ENCODE measurements at regions of chr7 and their contacts with region 1.

Region 1: DNA sequence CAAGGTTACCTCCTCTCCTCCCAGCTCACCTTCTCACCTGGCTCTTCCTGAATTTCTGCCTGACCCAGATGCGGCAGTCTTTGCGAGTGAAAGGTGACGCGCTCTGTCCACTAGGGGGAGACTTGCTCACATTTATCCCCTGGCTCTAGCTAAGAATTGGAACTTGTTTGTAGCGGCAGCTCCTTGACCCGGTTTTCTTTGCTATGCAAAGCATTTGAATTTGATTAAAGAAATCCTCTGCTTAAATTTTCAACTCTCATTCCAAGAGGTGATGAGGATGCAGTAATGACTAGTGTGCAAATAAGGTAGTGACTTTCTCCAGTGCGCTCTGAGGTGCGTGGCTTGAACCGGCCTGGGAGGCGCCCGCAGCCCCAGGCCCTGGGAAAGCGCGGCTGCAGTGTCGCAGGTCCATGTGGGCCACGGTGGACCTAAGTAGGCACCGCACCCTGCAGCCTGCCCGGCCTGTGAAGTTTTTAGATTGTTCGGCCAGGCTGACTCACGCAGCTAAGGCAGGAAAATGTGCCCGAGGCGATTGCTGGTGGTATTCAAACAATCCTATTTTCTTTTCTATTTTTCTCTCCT is 336.9 kb upstream of the NPSR1 start:
- DNase-seq: peak; percentile 79
- H3K4me3 ChIP-seq: peak overlapping the region in 2 of 3 experiments; percentile 2
- H3K27ac ChIP-seq: no peak overlapping the region
- H3K4me1 ChIP-seq: peaks cover 3% of the 10 kb centered on the region
- H3K27me3 ChIP-seq: no peaks in the 10 kb centered on the region
- CTCF ChIP-seq: peak; percentile 86 to 87
- POLR2A ChIP-seq: no peak

Region 2: DNA sequence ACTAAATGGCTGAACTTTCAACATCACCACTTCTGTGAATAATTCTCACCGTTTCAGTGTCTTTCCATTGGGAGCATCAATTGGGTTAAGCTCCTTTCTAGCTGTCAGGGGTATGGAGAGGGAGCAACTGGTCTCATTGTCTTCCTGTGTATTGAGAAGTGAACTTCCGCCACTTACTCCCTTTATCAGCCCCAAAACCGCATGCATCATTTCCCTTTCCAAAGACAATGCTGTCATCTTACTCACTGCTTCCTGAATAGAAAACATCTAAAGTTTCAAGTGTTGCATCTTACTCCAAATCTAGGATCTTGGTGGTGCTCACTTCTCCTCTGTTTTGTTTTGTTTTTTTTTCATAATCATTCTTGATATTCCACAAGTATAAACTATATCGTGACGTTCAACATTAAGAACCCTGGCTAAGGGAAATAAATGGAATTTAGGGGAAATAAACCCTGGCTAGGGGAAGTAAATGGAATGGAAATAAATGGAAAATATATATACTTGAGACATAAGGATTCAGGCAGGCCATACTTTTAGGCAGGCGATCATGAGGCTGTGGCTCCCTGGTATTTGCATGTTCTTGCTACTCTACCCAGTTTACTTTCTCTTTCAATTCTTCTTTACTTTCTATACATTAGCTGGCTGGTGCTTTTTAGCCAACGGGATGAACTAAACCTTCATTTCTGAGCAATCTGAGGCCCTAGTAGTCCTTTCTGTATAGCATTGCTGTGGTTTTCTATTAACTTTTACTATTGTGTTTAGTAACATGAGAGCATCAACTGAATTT is 43.9 kb before region 1 on chr7:
- CTCF ChIA-PET with region 1: interaction called, 4 read pairs
- POLR2A ChIA-PET with region 1: no interaction called
- dilution Hi-C with region 1: no loop called
- intact Hi-C with region 1: loop called (anchors 1 kb)
- DNase-seq: peak; percentile 84
- H3K4me3 ChIP-seq: peak overlapping the region in 1 of 3 experiments; percentile 29
- H3K27ac ChIP-seq: peak overlapping the region; percentile 86
- H3K4me1 ChIP-seq: peaks cover 25% of the 10 kb centered on the region
- H3K27me3 ChIP-seq: no peaks in the 10 kb centered on the region
- CTCF ChIP-seq: no peak
- POLR2A ChIP-seq: peak; percentile 58

Region 3: GRCh38 chr7:34309116-34309515 is 12.0 kb before region 1 on chr7:
- CTCF ChIA-PET with region 1: interaction called, 18 read pairs
- POLR2A ChIA-PET with region 1: no interaction called
- dilution Hi-C with region 1: no loop called
- intact Hi-C with region 1: no loop called
- DNase-seq: no peak
- H3K4me3 ChIP-seq: no peak overlapping the region
- H3K27ac ChIP-seq: no peak overlapping the region
- H3K4me1 ChIP-seq: no peaks in the 10 kb centered on the region
- H3K27me3 ChIP-seq: no peaks in the 10 kb centered on the region
- CTCF ChIP-seq: no peak
- POLR2A ChIP-seq: no peak

Region 4: DNA sequence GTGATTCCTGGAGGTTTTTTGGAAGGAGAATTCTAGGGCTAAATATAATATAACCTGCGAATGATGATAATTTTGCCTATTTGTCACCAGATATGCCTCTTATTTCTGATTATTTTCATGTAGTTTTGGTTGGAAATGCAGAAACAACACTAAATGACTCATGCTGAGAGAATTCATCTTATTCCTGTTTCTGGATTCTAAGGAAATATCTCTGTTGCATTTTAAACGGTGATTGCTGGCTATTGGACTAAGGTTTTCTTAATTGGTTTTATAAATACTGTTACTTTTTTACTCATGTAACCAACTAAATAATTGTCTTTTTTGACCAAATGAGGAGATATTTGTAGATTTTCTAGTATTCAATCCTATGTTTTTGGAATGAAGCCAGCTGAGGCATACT is 132.1 kb after region 1 on chr7:
- CTCF ChIA-PET with region 1: interaction called, 16 read pairs
- POLR2A ChIA-PET with region 1: no interaction called
- dilution Hi-C with region 1: no loop called
- intact Hi-C with region 1: no loop called
- DNase-seq: peak; percentile 71
- H3K4me3 ChIP-seq: peak overlapping the region in 1 of 3 experiments; percentile 27
- H3K27ac ChIP-seq: peak overlapping the region; percentile 63
- H3K4me1 ChIP-seq: peaks cover 30% of the 10 kb centered on the region
- H3K27me3 ChIP-seq: no peaks in the 10 kb centered on the region
- CTCF ChIP-seq: no peak
- POLR2A ChIP-seq: no peak

Region 5: GRCh38 chr7:34709771-34710170 is 388.7 kb after region 1 on chr7:
- CTCF ChIA-PET with region 1: no interaction called
- POLR2A ChIA-PET with region 1: no interaction called
- dilution Hi-C with region 1: no loop called
- intact Hi-C with region 1: no loop called
- DNase-seq: no peak
- H3K4me3 ChIP-seq: no peak overlapping the region
- H3K27ac ChIP-seq: no peak overlapping the region
- H3K4me1 ChIP-seq: no peaks in the 10 kb centered on the region
- H3K27me3 ChIP-seq: no peaks in the 10 kb centered on the region
- CTCF ChIP-seq: no peak
- POLR2A ChIP-seq: no peak

Region 6: GRCh38 chr7:34747867-34748727 is 427.0 kb after region 1 on chr7:
- CTCF ChIA-PET with region 1: no interaction called
- POLR2A ChIA-PET with region 1: no interaction called
- dilution Hi-C with region 1: no loop called
- intact Hi-C with region 1: loop called (anchors 2 kb)
- DNase-seq: peak; percentile 97
- H3K4me3 ChIP-seq: no peak overlapping the region
- H3K27ac ChIP-seq: peak overlapping the region; percentile 36
- H3K4me1 ChIP-seq: peaks cover 16% of the 10 kb centered on the region
- H3K27me3 ChIP-seq: no peaks in the 10 kb centered on the region
- CTCF ChIP-seq: no peak
- POLR2A ChIP-seq: no peak

Measured in endothelial cell of umbilical vein (primary cell).